ENCODE measurements at regions of chr2 and their contacts with region 1.

Region 1: DNA sequence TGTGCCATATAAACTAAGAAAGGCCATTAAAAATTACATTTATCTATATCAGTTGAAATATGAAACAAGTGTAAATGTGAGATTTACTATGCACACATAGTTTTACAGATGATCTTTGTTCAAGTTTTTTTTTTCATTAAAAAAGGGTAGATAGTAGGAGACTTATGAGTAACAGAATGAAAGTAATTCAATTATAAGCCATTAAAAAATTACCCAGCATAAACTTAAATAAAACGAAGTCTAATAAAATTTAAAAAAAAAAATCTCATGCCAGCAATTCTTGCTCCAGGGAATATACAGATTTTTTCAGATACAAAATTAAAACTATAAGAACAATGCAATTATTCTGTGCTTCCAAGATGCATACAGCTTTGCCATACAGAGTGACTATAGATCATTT is 118.3 kb upstream of the RNU4ATAC start:
- DNase-seq: no peak
- ATAC-seq: no peak
- H3K4me3 ChIP-seq: no peak overlapping the region
- H3K27ac ChIP-seq: no peak overlapping the region
- H3K4me1 ChIP-seq: no peaks in the 10 kb centered on the region
- H3K27me3 ChIP-seq: no peaks in the 10 kb centered on the region
- CTCF ChIP-seq: no peak
- EP300 ChIP-seq: no peak
- POLR2A ChIP-seq: no peak
- RAD21 ChIP-seq: no peak

Region 2: DNA sequence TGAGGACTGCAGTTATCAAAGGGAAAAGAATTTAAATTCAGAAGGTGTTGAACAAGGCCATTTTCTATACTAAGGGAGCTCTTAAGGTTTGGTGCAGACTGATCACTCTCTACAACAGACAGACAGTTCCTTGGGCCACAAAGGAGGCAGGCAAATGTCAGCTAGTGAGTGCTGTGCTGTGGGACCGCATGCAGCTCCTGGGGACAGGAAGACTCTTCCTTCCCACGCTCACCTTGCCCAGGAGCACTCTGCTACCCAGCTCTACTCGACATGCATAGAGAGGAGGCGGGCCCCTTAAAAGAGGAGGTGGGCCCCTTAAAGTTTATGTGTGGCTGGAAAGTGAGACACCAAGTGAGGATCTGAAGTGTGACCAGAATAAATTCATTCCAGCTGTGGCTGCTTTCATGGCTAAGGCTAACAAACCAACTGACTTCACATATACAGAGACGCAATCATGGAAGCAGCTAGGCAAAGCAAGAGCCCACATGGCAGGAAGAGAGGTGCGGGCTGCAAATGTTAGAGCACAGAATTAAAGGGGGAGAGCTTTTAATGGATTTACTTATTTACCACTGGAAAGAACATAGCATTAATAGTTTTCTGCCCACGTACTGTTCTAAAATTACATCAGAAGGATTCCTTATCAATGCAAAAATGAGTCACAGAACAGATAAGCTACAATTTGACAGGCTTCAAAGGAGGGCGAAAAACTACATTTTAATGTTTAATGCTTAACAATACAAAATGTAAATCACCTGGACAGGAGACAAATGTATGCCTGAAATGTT is 17.0 kb after region 1 on chr2:
- CTCF ChIA-PET with region 1: interaction called, 6 read pairs
- POLR2A ChIA-PET with region 1: interaction called, 3 read pairs
- RAD21 ChIA-PET with region 1: no interaction called
- SMC1A ChIA-PET with region 1: interaction called, 13 read pairs
- in situ Hi-C with region 1: no loop called
- intact Hi-C with region 1: no loop called
- DNase-seq: no peak
- ATAC-seq: no peak
- H3K4me3 ChIP-seq: no peak overlapping the region
- H3K27ac ChIP-seq: no peak overlapping the region
- H3K4me1 ChIP-seq: no peaks in the 10 kb centered on the region
- H3K27me3 ChIP-seq: no peaks in the 10 kb centered on the region
- CTCF ChIP-seq: no peak
- EP300 ChIP-seq: no peak
- POLR2A ChIP-seq: no peak
- RAD21 ChIP-seq: no peak

Region 3: DNA sequence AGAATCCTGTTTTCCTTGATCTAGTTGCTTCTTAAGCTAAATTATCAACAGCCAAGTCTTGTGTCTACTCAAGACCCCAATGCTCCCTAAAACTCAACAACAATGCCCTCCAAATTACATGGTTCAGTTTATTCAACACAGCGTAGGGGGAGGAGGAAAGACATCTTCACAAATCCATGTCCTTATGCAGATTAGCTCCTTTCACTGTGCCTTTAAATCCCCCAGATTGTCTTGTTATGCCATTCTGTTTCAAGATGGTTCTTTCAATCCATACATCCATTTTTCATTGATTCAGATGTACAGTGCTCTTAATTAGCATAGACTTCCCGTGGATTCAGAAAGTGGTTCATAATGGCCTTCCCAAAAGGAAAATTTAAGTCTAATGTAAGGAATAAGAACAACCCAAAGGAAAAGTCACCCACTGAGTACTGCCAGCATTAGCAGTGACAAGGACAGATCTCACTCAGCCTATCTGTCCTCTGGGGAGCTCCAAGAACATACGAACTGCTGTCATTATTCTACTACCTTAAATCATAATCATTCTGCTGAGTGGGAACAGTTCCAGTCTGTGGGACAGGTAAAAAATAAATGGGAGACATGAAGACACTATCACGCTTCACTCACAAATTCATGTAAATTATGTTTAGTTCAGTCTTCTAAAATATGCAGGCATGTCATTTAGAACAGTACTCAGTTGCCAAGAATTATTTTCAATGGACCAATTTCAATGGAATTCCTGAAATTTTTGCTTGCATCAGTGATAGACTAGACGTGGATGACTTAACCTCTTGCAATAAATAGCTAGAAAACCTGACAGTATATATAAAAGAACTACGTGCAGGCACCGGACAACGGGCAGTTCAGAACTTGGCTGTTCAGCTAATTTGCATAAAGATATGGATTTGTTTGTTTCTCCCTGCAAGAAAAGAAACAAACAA is 59.5 kb after region 1 on chr2:
- CTCF ChIA-PET with region 1: no interaction called
- POLR2A ChIA-PET with region 1: no interaction called
- RAD21 ChIA-PET with region 1: no interaction called
- SMC1A ChIA-PET with region 1: no interaction called
- in situ Hi-C with region 1: no loop called
- intact Hi-C with region 1: no loop called
- DNase-seq: no peak
- ATAC-seq: no peak
- H3K4me3 ChIP-seq: no peak overlapping the region
- H3K27ac ChIP-seq: no peak overlapping the region
- H3K4me1 ChIP-seq: no peaks in the 10 kb centered on the region
- H3K27me3 ChIP-seq: no peaks in the 10 kb centered on the region
- CTCF ChIP-seq: no peak
- EP300 ChIP-seq: no peak
- POLR2A ChIP-seq: no peak
- RAD21 ChIP-seq: no peak

Measured in GM12878 (cell line).